GM18951 (cell line): ENCODE measurements at regions of chr2 and their contacts with region 1.

Region 1: GRCh38 chr2:112054847-112055729 is at the start of gene TMEM87B:
- POLR2A ChIP-seq: peak; percentile 74

Region 2: GRCh38 chr2:111897924-111898702 is 157.0 kb before region 1 on chr2 and contains the start of gene MERTK:
- in situ Hi-C with region 1: loop called (anchors 5 kb)
- POLR2A ChIP-seq: peak; percentile 58

Region 3: GRCh38 chr2:112290088-112290487 is 235.0 kb after region 1 on chr2:
- in situ Hi-C with region 1: no loop called
- POLR2A ChIP-seq: no peak